ENCODE measurements at regions of chr6 and their contacts with region 1.

Region 1: GRCh38 chr6:107495196-107495643 is 5.3 kb downstream of the SOBP start:
- DNase-seq: peak in 4 of 5 donors; percentile 35 to 39 (median 36)
- ATAC-seq: peak in 2 of 4 donors; percentile 14 to 31
- H3K4me3 ChIP-seq: peak overlapping the region in 8 of 12 donors; percentile 2 to 96 (median 20)
- H3K27ac ChIP-seq: peak overlapping the region; percentile 72 to 90 (median 84)
- H3K4me1 ChIP-seq: peaks cover 3 to 78% (median 58%) of the 10 kb centered on the region in 12 donors
- H3K27me3 ChIP-seq: peaks cover 0 to 16% (median 0%) of the 10 kb centered on the region in 9 donors
- CTCF ChIP-seq: no peak
- POLR2A ChIP-seq: no peak

Region 2: DNA sequence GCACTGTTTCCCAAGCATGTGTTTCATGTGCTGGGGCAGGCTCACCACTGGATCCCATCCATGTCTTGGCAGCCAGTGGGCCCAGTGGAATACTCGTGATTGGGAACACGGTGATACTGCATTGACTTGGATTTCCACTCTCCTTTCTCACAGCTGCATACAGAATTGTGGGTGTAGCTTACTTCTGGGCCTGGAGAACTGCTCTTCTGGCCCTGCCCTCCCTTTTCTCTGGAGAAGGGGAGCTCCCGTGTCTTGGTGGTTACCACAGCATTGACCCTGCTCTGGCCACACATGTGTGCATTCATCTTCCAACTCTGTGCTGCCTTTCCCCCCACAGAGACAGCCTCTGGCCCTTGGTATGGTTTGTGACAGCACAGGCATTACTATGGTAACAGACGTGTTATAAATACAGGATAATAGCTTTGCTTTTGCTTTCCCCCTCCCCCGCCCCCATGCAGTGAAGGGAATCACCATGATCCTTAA is 16.3 kb after region 1 on chr6:
- intact Hi-C with region 1: loop called in 1 of 10 experiments (anchors 1 kb)
- DNase-seq: peak; percentile 63 to 80 (median 71)
- ATAC-seq: peak; percentile 92 to 94 (median 93)
- H3K4me3 ChIP-seq: no peak overlapping the region
- H3K27ac ChIP-seq: peak overlapping the region in 8 of 12 donors; percentile 6 to 53 (median 33)
- H3K4me1 ChIP-seq: peaks cover 0 to 43% (median 21%) of the 10 kb centered on the region in 12 donors
- H3K27me3 ChIP-seq: no peaks in the 10 kb centered on the region
- CTCF ChIP-seq: no peak
- POLR2A ChIP-seq: no peak

Region 3: DNA sequence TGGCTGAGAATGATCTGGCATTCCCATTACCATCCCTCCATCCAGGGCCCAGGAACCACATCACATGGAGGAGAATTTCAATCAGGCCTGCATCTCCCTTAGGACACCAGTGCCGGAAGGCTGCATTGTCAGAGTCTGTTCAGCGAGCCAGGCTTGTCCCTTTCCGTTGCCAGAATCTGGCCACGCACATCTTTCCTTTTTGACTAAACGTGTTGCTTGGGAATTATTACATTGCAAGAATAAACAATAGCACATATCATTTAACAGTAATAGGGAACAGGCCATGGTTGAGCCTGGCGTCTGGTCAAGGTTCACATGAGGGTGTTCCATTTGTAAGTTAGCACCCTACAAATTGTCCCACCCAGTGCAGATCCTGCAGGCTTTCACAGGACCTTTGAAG is 37.5 kb after region 1 on chr6:
- intact Hi-C with region 1: loop called in 4 of 10 experiments (anchors 2 to 5 kb)
- DNase-seq: peak in 4 of 5 donors; percentile 32 to 50 (median 40)
- ATAC-seq: peak in 3 of 4 donors; percentile 74 to 76 (median 76)
- H3K4me3 ChIP-seq: no peak overlapping the region
- H3K27ac ChIP-seq: peak overlapping the region in 5 of 12 donors; percentile 4 to 32 (median 26)
- H3K4me1 ChIP-seq: peaks cover 0 to 44% (median 11%) of the 10 kb centered on the region in 12 donors
- H3K27me3 ChIP-seq: no peaks in the 10 kb centered on the region
- CTCF ChIP-seq: no peak
- POLR2A ChIP-seq: no peak

Region 4: GRCh38 chr6:107539409-107539808 is 44.2 kb after region 1 on chr6:
- intact Hi-C with region 1: loop called in 6 of 10 experiments (anchors 5 kb)
- DNase-seq: no peak
- ATAC-seq: no peak
- H3K4me3 ChIP-seq: no peak overlapping the region
- H3K27ac ChIP-seq: no peak overlapping the region
- H3K4me1 ChIP-seq: peaks cover 0 to 57% (median 16%) of the 10 kb centered on the region in 12 donors
- H3K27me3 ChIP-seq: peaks cover 0 to 3% (median 0%) of the 10 kb centered on the region in 9 donors
- CTCF ChIP-seq: no peak
- POLR2A ChIP-seq: no peak

Measured in heart left ventricle (tissue), 16 donors.